ENCODE measurements at regions of chr7 and their contacts with region 1.

Region 1: DNA sequence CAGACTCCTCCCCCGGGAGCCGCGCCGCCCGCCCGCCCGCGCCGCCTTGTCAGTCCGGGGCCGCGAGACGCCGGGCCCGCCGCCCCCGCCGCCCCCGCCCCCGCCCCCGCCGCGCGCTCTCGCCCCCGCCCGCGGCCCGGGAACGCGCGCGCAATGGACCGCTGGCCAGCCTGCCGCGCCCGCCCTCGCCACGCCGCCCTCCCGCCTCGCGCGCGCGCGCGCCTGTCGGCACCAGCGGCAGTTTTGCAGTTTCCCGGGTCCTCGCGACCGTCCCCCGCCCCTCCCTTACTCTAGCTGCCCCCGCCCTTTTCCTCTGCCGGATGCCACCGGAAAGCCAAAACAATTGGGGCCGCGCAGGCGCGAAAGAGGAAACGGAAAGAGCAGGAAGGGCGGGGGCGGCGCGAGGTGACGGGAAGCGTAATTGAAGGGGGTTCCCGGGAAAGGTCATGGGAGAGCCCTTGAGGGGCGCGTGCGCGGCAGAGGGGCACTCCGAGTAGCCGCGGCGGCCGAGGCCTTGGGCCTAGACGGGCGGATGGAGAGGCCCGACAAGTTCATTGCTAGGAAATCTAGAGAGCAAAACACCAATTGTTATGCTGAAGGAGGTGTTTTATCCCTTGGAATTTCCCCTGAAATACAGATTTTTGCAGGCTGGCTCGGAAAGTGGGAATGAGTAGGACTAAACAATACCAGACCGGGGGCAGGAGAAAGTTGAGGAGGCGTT is 400 bp upstream of the KBTBD2 start:
- DNase-seq: peak; percentile 99
- H3K4me3 Mint-ChIP-seq: peak overlapping the region; percentile 93
- H3K27ac Mint-ChIP-seq: peak overlapping the region; percentile 99
- H3K4me1 Mint-ChIP-seq: peaks cover 51% of the 10 kb centered on the region
- H3K27me3 Mint-ChIP-seq: peaks cover 2% of the 10 kb centered on the region

Region 2: GRCh38 chr7:32846701-32847100 is 45.3 kb before region 1 on chr7:
- intact Hi-C with region 1: loop called (anchors 2 kb)
- DNase-seq: peak; percentile 95
- H3K4me3 Mint-ChIP-seq: peak overlapping the region; percentile 26
- H3K27ac Mint-ChIP-seq: no peak overlapping the region
- H3K4me1 Mint-ChIP-seq: peaks cover 9% of the 10 kb centered on the region
- H3K27me3 Mint-ChIP-seq: peaks cover 27% of the 10 kb centered on the region

Region 3: DNA sequence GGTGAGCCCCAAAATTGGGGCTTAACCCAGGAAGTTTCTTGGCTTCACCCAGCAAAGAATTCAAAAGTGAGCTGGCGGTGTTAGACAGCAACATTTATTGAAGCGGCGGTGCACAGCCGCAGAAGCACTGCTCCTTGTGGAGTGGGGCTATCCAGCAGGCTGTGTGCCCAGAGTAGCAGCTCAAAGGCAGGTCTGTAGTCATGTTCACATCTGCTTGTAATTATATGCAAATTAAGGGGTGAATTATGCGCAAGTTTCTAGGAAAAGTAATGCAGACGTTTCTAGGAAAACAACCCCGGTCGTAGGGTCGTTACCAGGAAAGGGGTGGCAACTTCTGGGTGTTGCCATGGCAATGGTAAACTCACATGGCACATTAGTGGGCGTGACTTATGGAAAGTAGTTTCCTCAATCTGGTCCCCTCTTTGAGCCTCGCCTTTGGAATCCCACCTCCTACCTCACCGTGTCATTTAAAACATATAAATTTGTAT is 13.3 kb after region 1 on chr7:
- intact Hi-C with region 1: loop called (anchors 1 kb)
- DNase-seq: peak; percentile 96
- H3K4me3 Mint-ChIP-seq: peak overlapping the region; percentile 83
- H3K27ac Mint-ChIP-seq: peak overlapping the region; percentile 94
- H3K4me1 Mint-ChIP-seq: peaks cover 17% of the 10 kb centered on the region
- H3K27me3 Mint-ChIP-seq: no peaks in the 10 kb centered on the region

Region 4: DNA sequence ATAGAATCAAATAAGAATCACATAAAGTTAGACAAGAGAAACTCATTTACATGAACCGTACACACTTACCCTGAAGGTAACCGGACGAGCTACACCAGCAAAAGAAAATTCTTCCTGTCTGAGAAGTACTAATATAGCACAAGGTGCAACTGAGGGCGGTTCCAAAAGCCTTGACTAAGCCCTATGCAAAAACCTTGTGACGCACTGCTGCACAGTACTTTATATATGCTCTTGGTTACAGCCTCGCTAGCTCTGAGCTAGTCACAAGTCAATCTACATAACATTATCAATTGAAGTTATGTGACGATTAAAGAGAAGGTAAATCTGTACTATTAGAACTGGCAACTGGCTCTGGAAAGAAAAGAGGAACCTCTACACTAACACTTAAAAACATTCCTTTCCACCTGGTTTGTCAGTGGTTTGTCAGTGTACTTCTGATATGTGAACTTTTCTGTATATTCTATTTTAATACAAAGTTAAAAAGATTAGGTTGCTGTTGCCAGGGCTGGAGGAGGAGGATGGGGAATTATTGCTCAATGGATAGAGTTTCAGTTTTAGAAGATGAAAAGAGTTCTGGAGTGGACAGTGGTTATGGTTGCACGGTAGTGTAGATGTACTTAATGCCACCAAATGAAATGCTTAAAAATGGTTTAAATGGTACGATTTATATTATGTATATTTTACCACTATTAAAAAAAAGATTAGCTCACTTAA is 149.0 kb after region 1 on chr7:
- intact Hi-C with region 1: loop called (anchors 1 kb)
- DNase-seq: peak; percentile 92
- H3K4me3 Mint-ChIP-seq: peak overlapping the region; percentile 72
- H3K27ac Mint-ChIP-seq: peak overlapping the region; percentile 56
- H3K4me1 Mint-ChIP-seq: peaks cover 42% of the 10 kb centered on the region
- H3K27me3 Mint-ChIP-seq: no peaks in the 10 kb centered on the region

Region 5: DNA sequence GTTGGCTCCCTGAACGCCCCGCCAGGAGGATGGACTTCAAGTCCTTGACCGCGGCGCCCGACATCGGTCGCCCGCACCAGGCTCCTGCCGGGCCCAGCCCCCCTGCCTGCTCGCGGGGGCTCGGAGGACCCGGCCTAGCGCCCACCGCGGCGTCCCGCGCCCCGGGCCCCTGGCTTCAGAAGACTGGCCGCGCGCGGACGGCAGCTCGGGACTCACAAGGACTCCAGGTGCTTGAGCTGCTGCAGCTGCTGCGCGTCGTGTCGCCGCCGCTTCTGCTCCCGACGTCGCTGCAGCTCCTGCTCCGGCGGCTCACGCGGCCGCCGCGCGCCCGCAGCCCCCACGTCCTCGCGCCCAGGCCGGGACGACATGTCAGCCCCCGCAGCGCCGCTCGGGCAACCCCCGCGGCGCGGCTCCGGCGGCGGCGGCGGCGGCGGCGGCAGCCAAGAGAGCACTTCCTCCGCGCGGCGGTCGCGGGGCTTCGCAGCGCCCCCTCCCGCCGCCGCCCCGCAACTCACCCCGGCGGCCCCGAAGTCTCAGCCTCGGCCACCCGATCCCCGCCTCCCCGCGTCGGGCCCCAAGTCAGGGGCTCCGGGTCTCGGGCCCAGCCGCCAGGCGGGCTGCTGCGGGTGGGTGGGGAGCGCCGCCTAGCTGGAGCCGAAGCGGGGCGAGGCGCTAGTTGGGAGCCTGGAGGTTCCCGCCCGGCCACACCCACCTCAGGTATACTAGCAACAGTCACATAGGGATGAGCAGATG is 217.2 kb after region 1 on chr7 and contains the start of gene RP9:
- intact Hi-C with region 1: loop called (anchors 2 kb)
- DNase-seq: peak; percentile 94
- H3K4me3 Mint-ChIP-seq: peak within 1 kb of the TSS; percentile 97
- H3K27ac Mint-ChIP-seq: peak within 1 kb of the TSS; percentile 84
- H3K4me1 Mint-ChIP-seq: peaks cover 25% of the 10 kb centered on the region
- H3K27me3 Mint-ChIP-seq: peaks cover 28% of the 10 kb centered on the region
- total RNA-seq, gene RP9: 23.2 and 25.1 TPM in 2 replicates

Measured in activated CD4-positive, alpha-beta T cell treated with anti-CD3 and anti-CD28 coated beads, Interleukin-2, amount 10 ng/mL, durations not matched to agents 24 days and 14 days (primary cell).